Naive thymus-derived CD4-positive, alpha-beta T cell (primary cell): ENCODE measurements at regions of chr4 and their contacts with region 1.

Region 1: GRCh38 chr4:25159884-25160713 is at the start of gene SEPSECS:
- DNase-seq: peak; percentile 82 to 96 (median 94)
- ATAC-seq: peak; percentile 89
- H3K4me3 ChIP-seq: peak within 1 kb of the TSS; percentile 75
- H3K4me3 Mint-ChIP-seq: peak within 1 kb of the TSS; percentile 87 to 97 (median 94)
- H3K27ac ChIP-seq: peak within 1 kb of the TSS; percentile 97
- H3K27ac Mint-ChIP-seq: peak within 1 kb of the TSS; percentile 93 to 98 (median 96)
- H3K4me1 ChIP-seq: peaks cover 4 to 14% of the 10 kb centered on the region in 2 donors
- H3K4me1 Mint-ChIP-seq: peaks cover 33 to 66% (median 52%) of the 10 kb centered on the region in 7 donors
- H3K27me3 ChIP-seq: no peaks in the 10 kb centered on the region
- H3K27me3 Mint-ChIP-seq: peaks cover 0 to 2% (median 0%) of the 10 kb centered on the region in 5 donors
- total RNA-seq, gene SEPSECS: 14.4 to 25.0 (median 17.2) TPM

Region 2: DNA sequence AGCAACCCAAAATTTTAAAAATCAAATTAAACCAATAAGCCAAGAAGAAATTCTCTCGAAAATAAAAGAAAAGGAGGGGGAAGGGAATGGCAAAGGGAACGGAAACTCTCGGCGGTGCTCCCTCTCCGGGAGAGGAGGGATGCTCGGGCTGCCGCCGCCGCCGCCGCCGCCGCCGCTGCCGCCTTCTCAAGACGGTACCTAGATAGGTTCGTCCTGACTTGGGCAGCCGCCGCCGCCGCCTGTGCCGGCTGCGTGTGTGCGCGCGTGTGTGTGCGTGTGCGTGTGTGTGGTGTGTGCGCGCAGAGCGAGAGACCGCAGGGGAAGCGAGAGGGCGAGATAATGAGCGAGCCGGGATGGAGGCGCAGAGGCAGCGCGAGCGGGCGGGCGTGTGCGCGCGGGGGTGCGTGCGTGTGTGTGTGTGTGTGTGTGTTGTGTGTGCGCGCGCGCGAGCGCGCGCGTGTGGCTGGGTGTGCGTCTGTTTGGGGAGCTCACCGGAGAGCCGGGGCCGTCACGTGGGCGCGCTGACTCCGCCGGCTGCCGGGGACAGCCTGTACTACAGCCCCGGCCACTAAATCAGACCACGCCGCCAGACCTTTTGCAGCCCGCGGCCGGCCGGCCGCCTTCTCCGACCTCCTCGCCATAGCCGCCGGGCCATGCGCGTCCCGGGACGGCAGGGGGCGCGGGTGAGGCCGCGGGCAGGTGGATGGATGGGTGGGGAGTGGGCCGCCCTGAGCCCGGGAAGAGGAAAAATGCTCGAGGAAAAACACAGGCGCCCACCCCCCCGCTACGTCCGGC is 687.4 kb before region 1 on chr4:
- CTCF ChIA-PET with region 1: no interaction called
- POLR2A ChIA-PET with region 1: no interaction called
- intact Hi-C with region 1: loop called in 1 of 2 experiments (anchors 5 kb)
- DNase-seq: peak; percentile 35 to 65 (median 59)
- ATAC-seq: peak; percentile 84
- H3K4me3 ChIP-seq: peak overlapping the region; percentile 29
- H3K4me3 Mint-ChIP-seq: peak overlapping the region; percentile 88 to 97 (median 94)
- H3K27ac ChIP-seq: no peak overlapping the region
- H3K27ac Mint-ChIP-seq: peak overlapping the region in 7 of 9 donors; percentile 79 to 94 (median 85)
- H3K4me1 ChIP-seq: peaks cover 0 to 6% of the 10 kb centered on the region in 2 donors
- H3K4me1 Mint-ChIP-seq: peaks cover 23 to 42% (median 33%) of the 10 kb centered on the region in 7 donors
- H3K27me3 ChIP-seq: peaks cover 0 to 21% of the 10 kb centered on the region in 2 donors
- H3K27me3 Mint-ChIP-seq: peaks cover 56 to 85% (median 78%) of the 10 kb centered on the region in 5 donors

Region 3: GRCh38 chr4:24809376-24809775 is 350.7 kb before region 1 on chr4:
- CTCF ChIA-PET with region 1: no interaction called
- POLR2A ChIA-PET with region 1: no interaction called
- intact Hi-C with region 1: no loop called
- DNase-seq: no peak
- ATAC-seq: no peak
- H3K4me3 ChIP-seq: no peak overlapping the region
- H3K4me3 Mint-ChIP-seq: no peak overlapping the region
- H3K27ac ChIP-seq: no peak overlapping the region
- H3K27ac Mint-ChIP-seq: no peak overlapping the region
- H3K4me1 ChIP-seq: no peaks in the 10 kb centered on the region
- H3K4me1 Mint-ChIP-seq: no peaks in the 10 kb centered on the region
- H3K27me3 ChIP-seq: no peaks in the 10 kb centered on the region
- H3K27me3 Mint-ChIP-seq: peaks cover 0 to 8% (median 0%) of the 10 kb centered on the region in 5 donors

Region 4: DNA sequence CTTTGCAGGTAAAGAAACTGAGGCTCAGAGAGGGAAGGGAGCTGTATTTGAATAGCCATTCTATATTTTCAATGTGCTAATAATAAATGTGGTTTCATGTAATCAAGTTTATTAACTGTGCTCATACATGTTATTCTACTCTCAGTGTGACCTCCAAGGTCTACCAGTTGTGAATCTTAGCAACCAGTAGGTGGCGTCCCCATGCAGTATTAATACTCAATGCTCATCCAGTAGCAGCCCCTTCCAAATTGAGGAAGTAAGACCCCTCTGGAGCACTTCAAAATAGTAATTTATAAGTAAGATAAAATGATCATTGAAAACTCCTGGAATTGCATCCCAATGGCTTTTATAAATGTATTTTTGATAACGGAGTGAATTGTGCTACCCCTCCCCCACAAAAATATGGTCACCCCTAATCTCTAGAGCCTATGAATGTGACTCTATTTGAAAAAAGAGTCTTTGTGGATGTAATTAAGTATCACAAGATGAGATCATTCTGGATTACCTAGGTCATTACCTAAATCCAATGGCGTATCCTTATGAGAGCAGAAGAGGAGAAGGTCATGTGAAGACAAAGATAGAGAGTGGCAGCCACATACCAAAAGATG is 20.5 kb after region 1 on chr4:
- CTCF ChIA-PET with region 1: interaction called, 6 read pairs
- POLR2A ChIA-PET with region 1: interaction called, 32 read pairs
- intact Hi-C with region 1: loop called (anchors 1 to 2 kb)
- DNase-seq: peak in 5 of 9 donors; percentile 14 to 39 (median 26)
- ATAC-seq: peak; percentile 80
- H3K4me3 ChIP-seq: no peak overlapping the region
- H3K4me3 Mint-ChIP-seq: no peak overlapping the region
- H3K27ac ChIP-seq: no peak overlapping the region
- H3K27ac Mint-ChIP-seq: no peak overlapping the region
- H3K4me1 ChIP-seq: peaks cover 4 to 16% of the 10 kb centered on the region in 2 donors
- H3K4me1 Mint-ChIP-seq: peaks cover 22 to 63% (median 47%) of the 10 kb centered on the region in 7 donors
- H3K27me3 ChIP-seq: no peaks in the 10 kb centered on the region
- H3K27me3 Mint-ChIP-seq: no peaks in the 10 kb centered on the region

Region 5: GRCh38 chr4:25376754-25377571 is 216.9 kb after region 1 on chr4 and contains the start of gene ANAPC4:
- CTCF ChIA-PET with region 1: no interaction called
- POLR2A ChIA-PET with region 1: interaction called, 5 read pairs
- intact Hi-C with region 1: loop called (anchors 1 kb)
- DNase-seq: peak; percentile 85 to 97 (median 92)
- ATAC-seq: peak; percentile 97
- H3K4me3 ChIP-seq: peak within 1 kb of the TSS; percentile 96
- H3K4me3 Mint-ChIP-seq: peak within 1 kb of the TSS in 2 of 10 donors; percentile 78 to 83
- H3K27ac ChIP-seq: peak within 1 kb of the TSS; percentile 76
- H3K27ac Mint-ChIP-seq: peak within 1 kb of the TSS in 7 of 9 donors; percentile 64 to 93 (median 83)
- H3K4me1 ChIP-seq: peaks cover 11 to 17% of the 10 kb centered on the region in 2 donors
- H3K4me1 Mint-ChIP-seq: peaks cover 0 to 18% (median 13%) of the 10 kb centered on the region in 7 donors
- H3K27me3 ChIP-seq: no peaks in the 10 kb centered on the region
- H3K27me3 Mint-ChIP-seq: no peaks in the 10 kb centered on the region
- total RNA-seq, gene ANAPC4: 40.6 to 55.3 (median 50.4) TPM